ENCODE measurements at regions of chr1 and their contacts with region 1.

Region 1: GRCh38 chr1:163071405-163072255 is 2.5 kb downstream of the RGS4 start:
- DNase-seq: peak; percentile 97
- ATAC-seq: peak; percentile 68
- H3K4me3 ChIP-seq: no peak overlapping the region
- H3K27ac ChIP-seq: peak overlapping the region; percentile 79
- H3K4me1 ChIP-seq: peaks cover 30% of the 10 kb centered on the region
- H3K27me3 ChIP-seq: no peaks in the 10 kb centered on the region
- CTCF ChIP-seq: peak; percentile 87

Region 2: GRCh38 chr1:162847839-162848453 is 223.7 kb before region 1 on chr1:
- CTCF ChIA-PET with region 1: interaction called, 13 read pairs
- POLR2A ChIA-PET with region 1: no interaction called
- intact Hi-C with region 1: loop called (anchors 1 kb)
- DNase-seq: peak; percentile 90
- ATAC-seq: peak; percentile 48
- H3K4me3 ChIP-seq: no peak overlapping the region
- H3K27ac ChIP-seq: no peak overlapping the region
- H3K4me1 ChIP-seq: peaks cover 15% of the 10 kb centered on the region
- H3K27me3 ChIP-seq: no peaks in the 10 kb centered on the region
- CTCF ChIP-seq: peak; percentile 99

Region 3: GRCh38 chr1:162854245-162854882 is 217.3 kb before region 1 on chr1:
- CTCF ChIA-PET with region 1: interaction called, 21 read pairs
- POLR2A ChIA-PET with region 1: no interaction called
- intact Hi-C with region 1: loop called (anchors 1 kb)
- DNase-seq: peak; percentile 93
- ATAC-seq: peak; percentile 52
- H3K4me3 ChIP-seq: no peak overlapping the region
- H3K27ac ChIP-seq: peak overlapping the region; percentile 81
- H3K4me1 ChIP-seq: peaks cover 49% of the 10 kb centered on the region
- H3K27me3 ChIP-seq: no peaks in the 10 kb centered on the region
- CTCF ChIP-seq: peak; percentile 97

Region 4: DNA sequence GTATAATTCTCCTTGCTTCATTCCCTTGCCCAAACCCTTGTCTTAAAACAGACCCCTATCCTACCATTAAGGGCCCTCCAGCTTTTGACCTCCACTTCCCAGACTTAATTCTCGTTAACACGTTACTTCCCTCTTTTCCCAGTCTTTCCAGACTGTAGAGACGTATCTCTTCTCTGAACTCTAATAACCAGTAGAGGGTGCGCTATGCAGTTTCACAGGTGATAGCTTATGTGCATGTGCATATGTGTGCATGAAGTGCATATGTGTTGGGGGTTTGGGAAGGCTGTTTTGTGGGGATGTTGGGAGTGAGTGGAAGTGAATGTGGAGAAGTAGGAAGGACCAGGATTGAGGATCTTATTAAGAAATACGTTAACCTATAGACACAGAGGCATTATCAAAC is 132.6 kb before region 1 on chr1:
- CTCF ChIA-PET with region 1: interaction called, 8 read pairs
- POLR2A ChIA-PET with region 1: interaction called, 9 read pairs
- intact Hi-C with region 1: loop called (anchors 1 kb)
- DNase-seq: peak; percentile 65
- ATAC-seq: peak; percentile 79
- H3K4me3 ChIP-seq: no peak overlapping the region
- H3K27ac ChIP-seq: no peak overlapping the region
- H3K4me1 ChIP-seq: no peaks in the 10 kb centered on the region
- H3K27me3 ChIP-seq: no peaks in the 10 kb centered on the region
- CTCF ChIP-seq: peak; percentile 81

Region 5: GRCh38 chr1:163250382-163250974 is 178.8 kb after region 1 on chr1:
- CTCF ChIA-PET with region 1: interaction called, 3 read pairs
- POLR2A ChIA-PET with region 1: no interaction called
- intact Hi-C with region 1: loop called (anchors 5 kb)
- DNase-seq: peak; percentile 38
- ATAC-seq: peak; percentile 95
- H3K4me3 ChIP-seq: no peak overlapping the region
- H3K27ac ChIP-seq: peak overlapping the region; percentile 46
- H3K4me1 ChIP-seq: peaks cover 13% of the 10 kb centered on the region
- H3K27me3 ChIP-seq: no peaks in the 10 kb centered on the region
- CTCF ChIP-seq: no peak

Region 6: DNA sequence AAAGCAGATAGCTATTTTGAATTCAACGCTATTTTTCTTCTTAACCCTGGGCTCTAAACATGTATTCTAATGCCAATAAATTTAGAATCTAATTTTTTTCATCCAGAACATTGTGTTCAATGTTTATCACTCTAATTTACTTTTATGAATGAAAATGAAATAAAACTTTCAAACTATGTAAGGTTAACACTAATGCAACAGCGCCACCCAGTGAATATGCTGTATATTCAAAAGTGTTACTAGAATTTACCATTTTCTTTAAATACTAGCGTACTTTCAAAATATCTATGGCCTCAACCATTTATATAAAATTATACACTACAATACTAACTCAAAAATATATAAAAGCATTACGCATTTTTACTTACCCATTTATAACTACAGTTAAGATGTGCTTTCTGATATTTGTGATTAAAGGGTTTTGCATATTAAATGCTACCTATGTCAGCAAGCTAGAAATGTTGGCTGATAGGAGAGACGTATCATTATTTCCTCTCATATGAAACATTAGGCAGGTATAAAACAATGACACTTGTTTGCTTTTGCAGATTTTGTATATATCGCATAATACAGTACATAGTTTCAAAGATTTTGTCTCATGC is 244.2 kb after region 1 on chr1:
- CTCF ChIA-PET with region 1: interaction called, 9 read pairs
- POLR2A ChIA-PET with region 1: no interaction called
- intact Hi-C with region 1: loop called (anchors 1 kb)
- DNase-seq: peak; percentile 68
- ATAC-seq: peak; percentile 37; the same call in 1 of the 2 replicates
- H3K4me3 ChIP-seq: no peak overlapping the region
- H3K27ac ChIP-seq: no peak overlapping the region
- H3K4me1 ChIP-seq: peaks cover 8% of the 10 kb centered on the region; the same call in 1 of the 2 replicates
- H3K27me3 ChIP-seq: no peaks in the 10 kb centered on the region
- CTCF ChIP-seq: peak; percentile 95

Measured in PC-3 (cell line).